PC-9 (cell line): ENCODE measurements at regions of chr6 and their contacts with region 1.

Region 1: GRCh38 chr6:2196079-2196679 is 49.2 kb downstream of the GMDS start:
- DNase-seq: peak in 1 of 2 experiments; percentile 17
- H3K4me3 ChIP-seq: no peak overlapping the region
- H3K27ac ChIP-seq: no peak overlapping the region
- H3K4me1 ChIP-seq: peaks cover 9% of the 10 kb centered on the region; the same call in 1 of the 2 replicates
- H3K27me3 ChIP-seq: no peaks in the 10 kb centered on the region
- CTCF ChIP-seq: peak; percentile 73

Region 2: GRCh38 chr6:1596088-1596852 is 599.9 kb before region 1 on chr6:
- CTCF ChIA-PET with region 1: no interaction called
- POLR2A ChIA-PET with region 1: no interaction called
- intact Hi-C with region 1: loop called (anchors 2 kb)
- DNase-seq: peak; percentile 43 to 61
- H3K4me3 ChIP-seq: no peak overlapping the region
- H3K27ac ChIP-seq: no peak overlapping the region
- H3K4me1 ChIP-seq: no peaks in the 10 kb centered on the region
- H3K27me3 ChIP-seq: no peaks in the 10 kb centered on the region
- CTCF ChIP-seq: peak; percentile 88

Region 3: GRCh38 chr6:2133718-2134310 is 62.4 kb before region 1 on chr6:
- CTCF ChIA-PET with region 1: no interaction called
- POLR2A ChIA-PET with region 1: no interaction called
- intact Hi-C with region 1: loop called (anchors 1 kb)
- DNase-seq: no peak
- H3K4me3 ChIP-seq: no peak overlapping the region
- H3K27ac ChIP-seq: no peak overlapping the region
- H3K4me1 ChIP-seq: peaks cover 24% of the 10 kb centered on the region
- H3K27me3 ChIP-seq: no peaks in the 10 kb centered on the region
- CTCF ChIP-seq: no peak

Region 4: DNA sequence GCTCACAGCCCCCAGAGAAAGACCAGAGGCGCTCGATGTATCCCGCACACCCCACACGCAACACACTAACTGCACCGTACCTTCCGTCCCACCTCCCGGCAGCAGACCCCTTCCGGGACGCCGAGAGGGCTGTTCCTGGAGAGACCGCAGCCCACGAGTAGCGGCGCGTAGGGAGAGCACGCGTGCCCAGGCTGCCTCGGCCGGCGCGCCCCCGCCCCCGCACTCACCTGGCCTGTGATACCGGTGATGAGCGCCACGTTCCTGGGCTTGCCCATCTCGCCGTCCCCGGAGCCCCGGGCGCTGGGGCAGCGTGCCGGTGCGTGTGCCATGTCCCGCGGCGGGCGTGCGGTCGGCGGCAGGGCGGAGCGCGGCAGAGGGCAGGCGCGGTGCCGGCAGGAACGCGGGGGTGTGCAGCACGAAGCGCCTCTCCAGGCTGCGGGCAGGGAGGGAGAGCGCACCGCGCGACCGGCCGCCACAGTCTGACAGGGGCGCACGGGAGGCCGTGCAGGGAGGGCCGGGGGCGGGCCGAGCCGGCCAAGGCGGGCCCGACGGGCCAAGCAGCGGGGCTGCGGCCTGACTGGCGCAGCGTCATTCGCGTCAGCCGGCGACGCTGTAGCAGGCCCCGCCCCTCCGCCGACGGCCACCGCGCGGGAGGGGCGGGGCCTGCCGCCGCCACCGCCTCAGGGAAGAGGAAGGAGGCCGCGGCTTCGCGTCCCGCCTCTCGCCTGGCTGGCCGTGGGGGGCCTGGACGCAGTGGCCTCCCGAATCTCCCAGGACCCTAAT is 49.1 kb after region 1 on chr6 and contains the start of gene GMDS:
- CTCF ChIA-PET with region 1: no interaction called
- POLR2A ChIA-PET with region 1: no interaction called
- intact Hi-C with region 1: loop called (anchors 2 kb)
- DNase-seq: peak; percentile 57 to 87
- H3K4me3 ChIP-seq: peak within 1 kb of the TSS; percentile 86
- H3K27ac ChIP-seq: peak within 1 kb of the TSS; percentile 97
- H3K4me1 ChIP-seq: peaks cover 10% of the 10 kb centered on the region
- H3K27me3 ChIP-seq: no peaks in the 10 kb centered on the region
- CTCF ChIP-seq: no peak
- total RNA-seq, gene GMDS: 30.1 and 38.3 TPM in 2 replicates

Region 5: GRCh38 chr6:2353412-2354137 is 157.4 kb after region 1 on chr6:
- CTCF ChIA-PET with region 1: no interaction called
- POLR2A ChIA-PET with region 1: no interaction called
- intact Hi-C with region 1: loop called (anchors 1 kb)
- DNase-seq: peak; percentile 60 to 62
- H3K4me3 ChIP-seq: no peak overlapping the region
- H3K27ac ChIP-seq: no peak overlapping the region
- H3K4me1 ChIP-seq: peaks cover 6% of the 10 kb centered on the region; the same call in 1 of the 2 replicates
- H3K27me3 ChIP-seq: no peaks in the 10 kb centered on the region
- CTCF ChIP-seq: peak; percentile 79